ENCODE measurements at regions of chr14 and their contacts with region 1.

Region 1: GRCh38 chr14:73209953-73210352 is 27.4 kb upstream of the PAPLN start:
- DNase-seq: no peak
- H3K4me3 ChIP-seq: no peak overlapping the region
- H3K4me3 Mint-ChIP-seq: no peak overlapping the region
- H3K27ac ChIP-seq: no peak overlapping the region
- H3K27ac Mint-ChIP-seq: no peak overlapping the region
- H3K4me1 ChIP-seq: no peaks in the 10 kb centered on the region
- H3K4me1 Mint-ChIP-seq: no peaks in the 10 kb centered on the region
- H3K27me3 ChIP-seq: no peaks in the 10 kb centered on the region
- H3K27me3 Mint-ChIP-seq: no peaks in the 10 kb centered on the region
- CTCF ChIP-seq: no peak

Region 2: GRCh38 chr14:73105050-73105449 is 104.9 kb before region 1 on chr14:
- intact Hi-C with region 1: loop called in 1 of 2 experiments (anchors 10 kb)
- DNase-seq: no peak
- H3K4me3 ChIP-seq: no peak overlapping the region
- H3K4me3 Mint-ChIP-seq: no peak overlapping the region
- H3K27ac ChIP-seq: no peak overlapping the region
- H3K27ac Mint-ChIP-seq: no peak overlapping the region
- H3K4me1 ChIP-seq: no peaks in the 10 kb centered on the region
- H3K4me1 Mint-ChIP-seq: no peaks in the 10 kb centered on the region
- H3K27me3 ChIP-seq: no peaks in the 10 kb centered on the region
- H3K27me3 Mint-ChIP-seq: no peaks in the 10 kb centered on the region
- CTCF ChIP-seq: no peak

Region 3: GRCh38 chr14:73273799-73274198 is 63.8 kb after region 1 on chr14:
- intact Hi-C with region 1: loop called in 1 of 2 experiments (anchors 2 kb)
- DNase-seq: no peak
- H3K4me3 ChIP-seq: no peak overlapping the region
- H3K4me3 Mint-ChIP-seq: no peak overlapping the region
- H3K27ac ChIP-seq: no peak overlapping the region
- H3K27ac Mint-ChIP-seq: no peak overlapping the region
- H3K4me1 ChIP-seq: peaks cover 9 to 16% of the 10 kb centered on the region in 2 donors
- H3K4me1 Mint-ChIP-seq: peaks cover 17% of the 10 kb centered on the region
- H3K27me3 ChIP-seq: no peaks in the 10 kb centered on the region
- H3K27me3 Mint-ChIP-seq: peaks cover 3 to 13% (median 8%) of the 10 kb centered on the region in 3 donors
- CTCF ChIP-seq: no peak